ENCODE measurements at regions of chr1 and their contacts with region 1.

Region 1: GRCh38 chr1:43383449-43383848 is 6.2 kb downstream of the MED8 start:
- DNase-seq: peak in 5 of 10 donors; percentile 44 to 82 (median 62)
- H3K4me3 ChIP-seq: no peak overlapping the region
- H3K27ac ChIP-seq: peak overlapping the region; percentile 84 to 100 (median 96)
- H3K27me3 ChIP-seq: no peaks in the 10 kb centered on the region
- CTCF ChIP-seq: peak in 55 of 56 donors; percentile 32 to 80 (median 59)

Region 2: DNA sequence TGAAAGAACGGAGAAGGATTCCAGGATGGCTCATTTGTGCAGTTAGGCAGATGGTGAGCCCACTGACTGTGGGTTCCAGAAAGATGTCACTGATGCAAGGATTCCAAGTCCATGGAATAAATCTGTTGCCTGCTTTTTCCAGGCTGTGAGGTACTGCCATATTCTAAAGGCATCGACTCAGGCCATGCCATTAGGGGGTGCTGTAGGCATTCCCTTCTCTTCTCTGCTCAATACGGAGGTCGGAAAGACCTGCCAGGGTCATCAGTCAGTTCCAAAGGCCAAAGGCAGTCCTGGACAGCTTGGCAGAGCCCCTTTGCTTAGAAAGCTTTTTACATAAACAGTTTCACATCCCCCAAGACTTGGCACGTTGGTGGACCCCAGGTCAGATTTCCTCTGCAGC is 145.4 kb before region 1 on chr1:
- intact Hi-C with region 1: loop called (anchors 1 to 2 kb)
- DNase-seq: peak; percentile 57 to 93 (median 76)
- H3K4me3 ChIP-seq: no peak overlapping the region
- H3K27ac ChIP-seq: peak overlapping the region in 56 of 59 donors; percentile 11 to 87 (median 70)
- H3K27me3 ChIP-seq: no peaks in the 10 kb centered on the region
- CTCF ChIP-seq: peak; percentile 52 to 94 (median 81)

Region 3: GRCh38 chr1:43293896-43294760 is 89.3 kb before region 1 on chr1:
- intact Hi-C with region 1: loop called (anchors 2 kb)
- DNase-seq: peak in 8 of 10 donors; percentile 56 to 82 (median 68)
- H3K4me3 ChIP-seq: peak overlapping the region in 5 of 59 donors; percentile 4 to 21 (median 9)
- H3K27ac ChIP-seq: peak overlapping the region; percentile 84 to 100 (median 97)
- H3K27me3 ChIP-seq: no peaks in the 10 kb centered on the region
- CTCF ChIP-seq: no peak

Measured in dorsolateral prefrontal cortex (tissue), 120 donors.